ENCODE measurements at regions of chr16 and their contacts with region 1.

Region 1: GRCh38 chr16:27169511-27170071 is 33.7 kb upstream of the KDM8 start:
- DNase-seq: peak; percentile 77
- H3K4me3 ChIP-seq: no peak overlapping the region
- H3K27ac ChIP-seq: peak overlapping the region; percentile 52
- H3K4me1 ChIP-seq: peaks cover 36% of the 10 kb centered on the region
- CTCF ChIP-seq: peak; percentile 64

Region 2: GRCh38 chr16:27154705-27155521 is 14.7 kb before region 1 on chr16:
- CTCF ChIA-PET with region 1: interaction called, 4 read pairs
- POLR2A ChIA-PET with region 1: interaction called, 4 read pairs
- intact Hi-C with region 1: loop called (anchors 2 kb)
- DNase-seq: peak; percentile 68
- H3K4me3 ChIP-seq: no peak overlapping the region
- H3K27ac ChIP-seq: no peak overlapping the region
- H3K4me1 ChIP-seq: peaks cover 12% of the 10 kb centered on the region
- CTCF ChIP-seq: peak; percentile 98

Region 3: GRCh38 chr16:27275394-27275793 is 105.8 kb after region 1 on chr16:
- CTCF ChIA-PET with region 1: no interaction called
- POLR2A ChIA-PET with region 1: no interaction called
- intact Hi-C with region 1: no loop called
- DNase-seq: no peak
- H3K4me3 ChIP-seq: no peak overlapping the region
- H3K27ac ChIP-seq: peak overlapping the region; percentile 89
- H3K4me1 ChIP-seq: peaks cover 52% of the 10 kb centered on the region
- CTCF ChIP-seq: no peak

Region 4: DNA sequence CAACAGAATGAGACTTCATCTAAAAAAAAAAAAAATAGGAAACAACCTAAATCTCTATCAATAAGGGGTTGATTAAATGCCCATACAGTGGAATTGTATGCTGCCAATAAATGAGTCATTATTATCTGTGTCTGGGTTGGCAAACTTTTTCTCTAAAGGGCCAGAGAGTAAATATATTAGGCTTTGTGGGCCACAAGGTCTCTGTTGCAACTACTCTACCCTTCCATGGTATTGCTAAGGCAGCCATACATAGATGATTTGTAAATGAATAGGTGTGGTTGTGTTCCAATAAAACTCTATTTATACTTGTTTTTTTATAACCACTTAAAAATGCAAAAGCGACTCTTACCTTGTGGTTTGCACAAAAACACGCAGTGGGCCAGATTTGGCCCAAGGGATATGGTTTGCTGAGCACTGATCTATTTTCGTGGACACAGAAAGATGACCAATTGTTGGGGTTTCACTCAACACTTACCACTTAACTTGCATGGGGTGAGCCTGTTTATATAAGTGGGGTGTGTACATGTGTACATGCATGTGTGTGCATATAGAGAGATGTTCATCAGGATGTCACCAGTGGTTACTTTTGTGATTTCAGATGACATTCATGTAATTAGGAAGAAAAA is 131.8 kb after region 1 on chr16:
- CTCF ChIA-PET with region 1: no interaction called
- POLR2A ChIA-PET with region 1: no interaction called
- intact Hi-C with region 1: loop called (anchors 5 kb)
- DNase-seq: no peak
- H3K4me3 ChIP-seq: peak overlapping the region; percentile 0
- H3K27ac ChIP-seq: peak overlapping the region; percentile 86
- H3K4me1 ChIP-seq: peaks cover 82% of the 10 kb centered on the region
- CTCF ChIP-seq: no peak

Region 5: GRCh38 chr16:27449434-27450195 is 280.0 kb after region 1 on chr16:
- CTCF ChIA-PET with region 1: no interaction called
- POLR2A ChIA-PET with region 1: no interaction called
- intact Hi-C with region 1: loop called (anchors 1 kb)
- DNase-seq: peak; percentile 23
- H3K4me3 ChIP-seq: no peak overlapping the region
- H3K27ac ChIP-seq: no peak overlapping the region
- H3K4me1 ChIP-seq: peaks cover 27% of the 10 kb centered on the region
- CTCF ChIP-seq: no peak